Activated CD8-positive, alpha-beta T cell treated with anti-CD3 and anti-CD28 coated beads for 36 hours (primary cell): ENCODE measurements at regions of chr1 and their contacts with region 1.

Region 1: GRCh38 chr1:168439456-168440375 is 104.1 kb downstream of the XCL2 start:
- DNase-seq: peak; percentile 94
- ATAC-seq: peak; percentile 92
- H3K4me3 Mint-ChIP-seq: peak overlapping the region; percentile 68
- H3K27ac Mint-ChIP-seq: peak overlapping the region; percentile 85
- H3K4me1 Mint-ChIP-seq: peaks cover 58% of the 10 kb centered on the region
- H3K27me3 Mint-ChIP-seq: no peaks in the 10 kb centered on the region
- CTCF ChIP-seq: peak; percentile 75

Region 2: DNA sequence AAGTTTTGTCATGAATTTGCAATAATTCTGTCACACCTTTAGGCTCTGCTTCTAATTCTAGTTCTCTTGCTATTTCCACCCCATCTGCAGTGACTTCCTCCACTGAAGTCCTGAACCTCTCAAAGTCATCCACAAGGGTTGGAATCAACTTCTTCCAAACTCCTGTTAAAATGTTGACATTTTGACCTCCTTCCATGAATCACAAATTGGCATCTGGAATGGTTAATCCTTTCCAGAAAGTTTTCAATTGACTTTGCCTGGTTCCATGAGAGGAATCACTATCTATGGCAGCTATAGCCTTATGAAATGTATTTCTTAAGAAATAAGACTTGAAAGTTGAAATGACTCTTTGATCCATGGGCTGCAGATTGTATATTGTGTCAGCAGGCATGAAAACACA is 233.6 kb before region 1 on chr1:
- CTCF ChIA-PET with region 1: no interaction called
- POLR2A ChIA-PET with region 1: no interaction called
- intact Hi-C with region 1: no loop called
- DNase-seq: no peak
- ATAC-seq: no peak
- H3K4me3 Mint-ChIP-seq: no peak overlapping the region
- H3K27ac Mint-ChIP-seq: no peak overlapping the region
- H3K4me1 Mint-ChIP-seq: no peaks in the 10 kb centered on the region
- H3K27me3 Mint-ChIP-seq: no peaks in the 10 kb centered on the region
- CTCF ChIP-seq: no peak

Region 3: GRCh38 chr1:168421399-168422004 is 18.2 kb before region 1 on chr1:
- CTCF ChIA-PET with region 1: interaction called, 24 read pairs
- POLR2A ChIA-PET with region 1: no interaction called
- intact Hi-C with region 1: no loop called
- DNase-seq: no peak
- ATAC-seq: peak; percentile 90
- H3K4me3 Mint-ChIP-seq: peak overlapping the region; percentile 22
- H3K27ac Mint-ChIP-seq: peak overlapping the region; percentile 89
- H3K4me1 Mint-ChIP-seq: peaks cover 29% of the 10 kb centered on the region
- H3K27me3 Mint-ChIP-seq: no peaks in the 10 kb centered on the region
- CTCF ChIP-seq: no peak

Region 4: GRCh38 chr1:168466092-168466713 is 26.5 kb after region 1 on chr1:
- CTCF ChIA-PET with region 1: interaction called, 38 read pairs
- POLR2A ChIA-PET with region 1: interaction called, 3 read pairs
- intact Hi-C with region 1: no loop called
- DNase-seq: peak; percentile 86
- ATAC-seq: peak; percentile 86
- H3K4me3 Mint-ChIP-seq: peak overlapping the region; percentile 22
- H3K27ac Mint-ChIP-seq: peak overlapping the region; percentile 91
- H3K4me1 Mint-ChIP-seq: peaks cover 57% of the 10 kb centered on the region
- H3K27me3 Mint-ChIP-seq: no peaks in the 10 kb centered on the region
- CTCF ChIP-seq: no peak

Region 5: DNA sequence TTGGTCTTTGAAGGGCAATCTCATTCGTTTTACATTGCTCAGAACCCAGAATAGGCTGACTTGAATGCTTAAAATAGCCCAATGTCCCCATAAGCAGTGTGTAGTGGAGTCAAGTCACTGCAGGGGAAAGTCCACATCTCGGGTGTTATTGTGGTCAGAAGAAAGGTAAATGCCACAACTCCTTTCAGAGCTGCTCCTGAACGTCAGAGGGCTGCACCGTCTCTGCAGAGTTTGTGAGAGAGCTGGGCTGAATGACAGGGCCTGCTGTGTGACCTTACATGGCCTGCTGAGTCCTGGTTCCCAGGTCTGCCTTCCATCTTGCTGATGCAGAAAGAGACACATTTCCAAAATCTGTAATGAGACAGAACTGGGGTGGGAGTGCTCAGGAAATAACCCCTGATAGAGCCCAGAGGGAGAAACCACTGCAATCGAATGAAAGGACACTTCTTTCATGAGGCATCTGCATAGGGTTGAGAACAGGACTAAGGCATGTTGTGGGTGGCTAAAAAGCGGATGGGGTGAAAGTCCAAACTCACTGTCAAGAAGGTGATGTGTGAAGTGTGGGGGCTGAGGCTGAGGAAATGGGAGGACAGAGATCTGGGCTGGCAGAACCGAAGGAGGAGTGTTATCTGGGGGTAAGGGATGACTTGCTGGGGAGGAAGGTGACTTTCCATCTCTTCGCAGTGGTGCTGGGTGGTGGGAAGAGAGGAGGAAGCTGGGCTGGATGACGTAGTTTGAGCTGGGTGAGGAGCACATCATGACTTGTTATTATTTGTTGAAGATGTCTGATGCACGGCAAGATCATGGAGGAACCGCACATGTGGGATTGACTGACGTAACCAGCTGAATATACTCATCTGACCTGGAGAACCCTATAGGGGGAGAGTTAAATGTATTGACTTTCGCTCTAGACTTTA is 70.4 kb after region 1 on chr1:
- CTCF ChIA-PET with region 1: interaction called, 3 read pairs
- POLR2A ChIA-PET with region 1: no interaction called
- intact Hi-C with region 1: loop called (anchors 5 kb)
- DNase-seq: peak; percentile 84
- ATAC-seq: peak; percentile 71
- H3K4me3 Mint-ChIP-seq: peak overlapping the region; percentile 32
- H3K27ac Mint-ChIP-seq: peak overlapping the region; percentile 97
- H3K4me1 Mint-ChIP-seq: peaks cover 88% of the 10 kb centered on the region
- H3K27me3 Mint-ChIP-seq: no peaks in the 10 kb centered on the region
- CTCF ChIP-seq: no peak

Region 6: GRCh38 chr1:168572633-168573032 is 132.9 kb after region 1 on chr1:
- CTCF ChIA-PET with region 1: interaction called, 6 read pairs
- POLR2A ChIA-PET with region 1: no interaction called
- intact Hi-C with region 1: loop called (anchors 5 kb)
- DNase-seq: no peak
- ATAC-seq: no peak
- H3K4me3 Mint-ChIP-seq: no peak overlapping the region
- H3K27ac Mint-ChIP-seq: no peak overlapping the region
- H3K4me1 Mint-ChIP-seq: peaks cover 32% of the 10 kb centered on the region
- H3K27me3 Mint-ChIP-seq: no peaks in the 10 kb centered on the region
- CTCF ChIP-seq: no peak